ENCODE measurements at regions of chr7 and their contacts with region 1.

Region 1: DNA sequence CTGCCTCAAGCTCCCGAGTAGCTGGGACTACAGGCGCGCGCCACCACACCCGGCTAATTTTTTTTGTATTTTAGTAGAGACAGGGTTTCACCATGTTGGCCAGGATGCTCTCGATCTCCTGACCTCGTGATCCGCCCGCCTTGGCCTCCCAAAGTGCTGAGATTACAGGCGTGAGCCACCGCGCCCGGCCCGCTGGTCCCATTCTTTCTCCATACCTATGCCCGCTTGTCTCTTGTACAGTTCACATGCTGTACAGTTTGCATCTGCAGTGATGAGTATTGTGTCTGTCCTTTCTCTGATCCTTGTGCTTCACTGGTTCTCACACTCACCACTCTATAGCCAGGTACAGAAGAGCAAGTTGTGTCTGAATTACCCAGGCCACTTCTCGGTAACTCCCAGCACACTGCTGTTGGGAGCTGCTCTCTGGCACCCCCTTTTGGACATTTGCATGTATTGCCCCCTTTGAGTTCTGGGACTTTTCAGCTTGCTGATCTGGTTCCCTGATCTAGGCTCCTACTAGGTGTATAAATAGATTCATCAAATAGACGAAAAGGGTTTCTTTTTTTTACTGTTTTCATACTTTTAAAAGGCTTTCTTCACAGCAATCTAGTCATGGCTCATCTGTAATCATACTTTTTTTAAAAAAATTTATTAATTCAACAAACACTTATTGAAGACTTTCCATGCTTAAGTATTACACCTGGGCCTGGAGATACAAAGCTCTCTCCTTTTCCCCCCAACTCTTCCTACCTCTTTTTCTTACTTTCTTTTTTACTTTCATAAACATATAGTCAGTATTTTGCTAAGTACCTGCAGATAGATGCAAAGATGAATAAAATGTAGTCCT is 53.5 kb downstream of the AOAH start:
- DNase-seq: peak; percentile 56 to 74 (median 73)
- H3K4me3 ChIP-seq: no peak overlapping the region
- H3K4me3 Mint-ChIP-seq: peak overlapping the region in 1 of 8 donors; percentile 50
- H3K27ac ChIP-seq: no peak overlapping the region
- H3K27ac Mint-ChIP-seq: peak overlapping the region in 4 of 7 donors; percentile 58 to 89 (median 78)
- H3K4me1 ChIP-seq: peaks cover 7% of the 10 kb centered on the region
- H3K4me1 Mint-ChIP-seq: peaks cover 4 to 8% (median 5%) of the 10 kb centered on the region in 4 donors
- H3K27me3 ChIP-seq: no peaks in the 10 kb centered on the region
- H3K27me3 Mint-ChIP-seq: peaks cover 2% of the 10 kb centered on the region in 2 donors

Region 2: DNA sequence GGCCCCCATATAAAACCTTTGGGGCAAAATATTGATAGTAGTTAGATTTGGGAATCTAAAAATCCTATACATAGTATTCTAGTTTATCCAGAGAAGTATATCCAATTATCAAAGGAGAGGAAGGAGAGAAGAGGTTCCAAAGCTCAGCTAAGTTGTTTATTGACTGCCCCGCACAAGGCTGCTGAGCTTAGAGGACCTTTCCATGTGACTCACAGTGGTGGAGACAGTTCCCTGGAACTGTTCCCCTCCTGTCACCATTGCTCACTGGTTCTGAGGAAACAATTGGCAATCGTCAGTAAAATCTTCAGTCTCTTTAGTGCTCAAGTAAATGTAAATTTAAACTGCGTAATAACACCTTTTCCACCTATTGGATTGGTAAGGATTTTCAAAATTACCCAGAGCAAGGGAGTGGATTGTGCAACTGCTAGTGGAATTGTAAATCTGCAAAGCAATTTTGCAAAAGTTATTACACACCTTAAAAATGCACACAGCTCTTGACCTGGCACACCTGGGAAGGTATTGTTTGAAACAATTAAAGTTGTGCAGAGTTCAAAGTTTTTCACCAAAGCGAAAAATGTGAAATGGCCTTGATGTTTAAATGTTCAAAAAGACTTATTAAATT is 454.6 kb before region 1 on chr7:
- CTCF ChIA-PET with region 1: no interaction called
- POLR2A ChIA-PET with region 1: no interaction called
- intact Hi-C with region 1: no loop called
- DNase-seq: no peak
- H3K4me3 ChIP-seq: no peak overlapping the region
- H3K4me3 Mint-ChIP-seq: no peak overlapping the region
- H3K27ac ChIP-seq: no peak overlapping the region
- H3K27ac Mint-ChIP-seq: no peak overlapping the region
- H3K4me1 ChIP-seq: no peaks in the 10 kb centered on the region
- H3K4me1 Mint-ChIP-seq: peaks cover 0 to 3% (median 2%) of the 10 kb centered on the region in 4 donors
- H3K27me3 ChIP-seq: no peaks in the 10 kb centered on the region
- H3K27me3 Mint-ChIP-seq: no peaks in the 10 kb centered on the region

Region 3: GRCh38 chr7:36473454-36474282 is 197.1 kb before region 1 on chr7:
- CTCF ChIA-PET with region 1: interaction called, 17 read pairs
- POLR2A ChIA-PET with region 1: no interaction called
- intact Hi-C with region 1: no loop called
- DNase-seq: no peak
- H3K4me3 ChIP-seq: no peak overlapping the region
- H3K4me3 Mint-ChIP-seq: no peak overlapping the region
- H3K27ac ChIP-seq: no peak overlapping the region
- H3K27ac Mint-ChIP-seq: no peak overlapping the region
- H3K4me1 ChIP-seq: peaks cover 5% of the 10 kb centered on the region
- H3K4me1 Mint-ChIP-seq: peaks cover 0 to 9% (median 3%) of the 10 kb centered on the region in 4 donors
- H3K27me3 ChIP-seq: no peaks in the 10 kb centered on the region
- H3K27me3 Mint-ChIP-seq: no peaks in the 10 kb centered on the region

Region 4: DNA sequence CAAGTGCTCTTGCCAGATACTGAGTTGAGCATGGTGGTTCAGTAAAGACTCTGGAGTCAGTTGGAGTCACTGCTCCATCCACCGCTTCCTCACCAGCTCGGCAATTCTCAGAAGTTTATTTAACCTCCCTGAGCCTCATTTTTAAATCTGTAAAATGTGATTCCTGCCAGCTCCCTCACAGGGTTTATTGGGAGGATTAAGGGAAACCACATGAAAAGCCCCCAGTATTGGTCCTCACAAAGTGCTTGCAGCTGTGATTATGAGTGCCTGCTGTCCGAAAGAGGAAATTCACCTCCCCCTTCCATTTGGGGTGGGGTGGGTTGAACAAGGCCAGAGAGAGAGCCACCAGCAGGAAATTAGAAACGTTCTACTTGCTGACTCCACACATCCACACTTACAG is 45.6 kb before region 1 on chr7:
- CTCF ChIA-PET with region 1: interaction called, 26 read pairs
- POLR2A ChIA-PET with region 1: no interaction called
- intact Hi-C with region 1: no loop called
- DNase-seq: no peak
- H3K4me3 ChIP-seq: no peak overlapping the region
- H3K4me3 Mint-ChIP-seq: no peak overlapping the region
- H3K27ac ChIP-seq: no peak overlapping the region
- H3K27ac Mint-ChIP-seq: no peak overlapping the region
- H3K4me1 ChIP-seq: peaks cover 10% of the 10 kb centered on the region
- H3K4me1 Mint-ChIP-seq: peaks cover 8 to 17% (median 10%) of the 10 kb centered on the region in 4 donors
- H3K27me3 ChIP-seq: no peaks in the 10 kb centered on the region
- H3K27me3 Mint-ChIP-seq: peaks cover 0 to 3% of the 10 kb centered on the region in 2 donors

Region 5: DNA sequence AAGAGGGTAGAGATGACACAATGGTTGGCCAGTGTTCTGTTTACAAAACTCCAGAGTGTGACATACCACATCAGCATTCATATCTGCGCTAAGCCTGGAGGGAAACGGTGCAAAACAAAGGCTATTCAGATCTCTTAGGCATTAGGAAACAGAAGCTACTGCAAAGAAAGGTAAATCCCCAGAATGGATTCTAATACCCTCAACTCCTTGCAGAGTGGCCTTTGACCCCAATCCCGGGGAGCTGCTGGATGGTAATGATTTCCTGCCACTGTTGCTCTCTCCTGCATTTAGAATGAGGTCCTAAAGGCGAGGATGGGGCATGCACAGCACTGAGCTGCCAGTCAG is 11.7 kb before region 1 on chr7:
- CTCF ChIA-PET with region 1: interaction called, 27 read pairs
- POLR2A ChIA-PET with region 1: no interaction called
- intact Hi-C with region 1: no loop called
- DNase-seq: no peak
- H3K4me3 ChIP-seq: no peak overlapping the region
- H3K4me3 Mint-ChIP-seq: no peak overlapping the region
- H3K27ac ChIP-seq: no peak overlapping the region
- H3K27ac Mint-ChIP-seq: no peak overlapping the region
- H3K4me1 ChIP-seq: no peaks in the 10 kb centered on the region
- H3K4me1 Mint-ChIP-seq: peaks cover 0 to 22% (median 3%) of the 10 kb centered on the region in 4 donors
- H3K27me3 ChIP-seq: no peaks in the 10 kb centered on the region
- H3K27me3 Mint-ChIP-seq: no peaks in the 10 kb centered on the region

Region 6: GRCh38 chr7:37201003-37201875 is 530.4 kb after region 1 on chr7:
- CTCF ChIA-PET with region 1: interaction called, 11 read pairs
- POLR2A ChIA-PET with region 1: no interaction called
- intact Hi-C with region 1: loop called (anchors 5 kb)
- DNase-seq: peak in 4 of 5 donors; percentile 10 to 28 (median 25)
- H3K4me3 ChIP-seq: no peak overlapping the region
- H3K4me3 Mint-ChIP-seq: no peak overlapping the region
- H3K27ac ChIP-seq: no peak overlapping the region
- H3K27ac Mint-ChIP-seq: peak overlapping the region in 3 of 7 donors; percentile 5 to 59 (median 22)
- H3K4me1 ChIP-seq: no peaks in the 10 kb centered on the region
- H3K4me1 Mint-ChIP-seq: peaks cover 4 to 12% (median 7%) of the 10 kb centered on the region in 4 donors
- H3K27me3 ChIP-seq: no peaks in the 10 kb centered on the region
- H3K27me3 Mint-ChIP-seq: no peaks in the 10 kb centered on the region